RWPE1 (cell line): ENCODE measurements at regions of chr3 and their contacts with region 1.

Region 1: DNA sequence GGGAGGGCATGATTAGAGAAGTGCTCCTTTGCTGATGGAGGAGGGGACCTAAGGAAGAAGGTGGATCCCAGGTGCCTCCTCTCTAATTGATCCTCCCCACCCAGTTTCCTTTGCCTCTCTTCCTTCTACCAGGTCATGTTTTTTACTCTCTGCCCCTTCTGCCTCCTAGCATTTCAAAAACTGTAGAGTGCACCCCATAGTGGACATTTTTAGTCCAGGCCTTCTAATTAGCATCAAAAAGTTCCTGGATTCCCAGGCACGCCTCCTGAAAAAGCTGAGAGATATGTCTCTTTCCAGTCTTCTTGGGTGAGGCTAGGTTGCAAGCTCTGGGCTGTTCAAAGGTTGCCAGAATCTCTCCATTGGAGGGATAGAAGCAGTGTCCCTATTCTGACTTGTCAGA is 18.7 kb upstream of the ITGB5 start:
- DNase-seq: no peak
- H3K27ac ChIP-seq: no peak overlapping the region
- CTCF ChIP-seq: no peak

Region 2: DNA sequence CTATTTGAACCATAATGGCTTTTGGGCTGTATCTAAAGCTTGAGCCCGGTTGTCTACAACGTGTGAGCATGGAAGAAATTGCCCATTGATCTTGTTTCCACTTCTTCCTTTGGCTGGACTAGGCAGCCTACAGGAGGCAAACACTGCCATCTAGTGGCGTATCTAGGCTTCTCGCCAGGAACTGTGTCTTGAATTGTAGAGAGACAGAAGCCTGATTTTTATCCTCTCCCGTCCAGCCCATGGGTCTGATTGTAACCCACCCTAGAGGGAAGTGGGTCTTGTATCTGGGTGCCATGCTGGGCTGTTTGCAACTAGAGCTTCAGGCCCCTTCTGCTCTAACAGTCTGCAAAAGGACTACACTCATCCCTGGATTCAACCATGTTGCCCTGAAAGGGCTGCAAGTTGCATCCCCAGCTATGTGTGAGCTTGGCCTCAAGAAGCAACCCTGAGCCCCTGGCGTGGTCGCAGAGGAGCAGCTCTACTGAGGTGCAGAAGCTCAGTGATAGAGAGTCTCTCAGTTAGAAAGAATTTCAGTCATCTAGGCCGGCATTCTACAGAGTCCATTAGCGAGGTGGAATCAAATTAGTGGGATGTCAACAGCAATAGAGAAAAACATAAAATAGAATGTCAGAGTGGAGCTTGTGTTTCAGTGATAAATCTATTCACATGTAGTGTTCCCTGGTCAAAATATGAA is 345.8 kb before region 1 on chr3:
- CTCF ChIA-PET with region 1: interaction called, 11 read pairs
- POLR2A ChIA-PET with region 1: no interaction called
- DNase-seq: peak; percentile 75
- H3K27ac ChIP-seq: peak overlapping the region; percentile 83
- CTCF ChIP-seq: peak; percentile 87

Region 3: GRCh38 chr3:124676236-124676635 is 229.6 kb before region 1 on chr3:
- CTCF ChIA-PET with region 1: no interaction called
- POLR2A ChIA-PET with region 1: no interaction called
- DNase-seq: no peak
- H3K27ac ChIP-seq: no peak overlapping the region
- CTCF ChIP-seq: no peak

Region 4: GRCh38 chr3:124761250-124761796 is 144.5 kb before region 1 on chr3:
- CTCF ChIA-PET with region 1: interaction called, 61 read pairs
- POLR2A ChIA-PET with region 1: no interaction called
- DNase-seq: peak; percentile 63
- H3K27ac ChIP-seq: no peak overlapping the region
- CTCF ChIP-seq: peak; percentile 94

Region 5: DNA sequence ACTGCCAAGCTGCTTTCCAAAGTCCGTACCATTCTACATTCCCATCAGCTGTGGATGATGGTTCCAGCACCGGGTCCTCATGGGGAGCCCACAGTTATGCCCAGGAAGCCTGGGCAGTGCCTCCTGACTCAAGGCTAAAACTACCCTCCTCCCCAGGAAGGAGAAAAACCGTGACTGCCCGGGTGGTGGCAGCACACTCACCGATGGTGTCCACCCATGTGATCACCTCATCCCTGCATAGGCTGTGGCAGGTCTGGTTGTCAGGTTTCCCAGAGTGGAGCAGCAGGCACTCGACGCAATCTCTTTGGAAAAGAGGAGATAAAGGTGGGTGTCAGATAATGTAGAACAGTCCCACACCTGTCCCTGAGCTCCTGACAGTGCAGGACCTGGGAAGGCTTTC is 137.0 kb before region 1 on chr3:
- CTCF ChIA-PET with region 1: interaction called, 19 read pairs
- POLR2A ChIA-PET with region 1: no interaction called
- DNase-seq: peak; percentile 65
- H3K27ac ChIP-seq: no peak overlapping the region
- CTCF ChIP-seq: no peak

Region 6: GRCh38 chr3:124780356-124780755 is 125.5 kb before region 1 on chr3:
- CTCF ChIA-PET with region 1: interaction called, 48 read pairs
- POLR2A ChIA-PET with region 1: no interaction called
- DNase-seq: no peak
- H3K27ac ChIP-seq: peak overlapping the region; percentile 30
- CTCF ChIP-seq: no peak

Region 7: DNA sequence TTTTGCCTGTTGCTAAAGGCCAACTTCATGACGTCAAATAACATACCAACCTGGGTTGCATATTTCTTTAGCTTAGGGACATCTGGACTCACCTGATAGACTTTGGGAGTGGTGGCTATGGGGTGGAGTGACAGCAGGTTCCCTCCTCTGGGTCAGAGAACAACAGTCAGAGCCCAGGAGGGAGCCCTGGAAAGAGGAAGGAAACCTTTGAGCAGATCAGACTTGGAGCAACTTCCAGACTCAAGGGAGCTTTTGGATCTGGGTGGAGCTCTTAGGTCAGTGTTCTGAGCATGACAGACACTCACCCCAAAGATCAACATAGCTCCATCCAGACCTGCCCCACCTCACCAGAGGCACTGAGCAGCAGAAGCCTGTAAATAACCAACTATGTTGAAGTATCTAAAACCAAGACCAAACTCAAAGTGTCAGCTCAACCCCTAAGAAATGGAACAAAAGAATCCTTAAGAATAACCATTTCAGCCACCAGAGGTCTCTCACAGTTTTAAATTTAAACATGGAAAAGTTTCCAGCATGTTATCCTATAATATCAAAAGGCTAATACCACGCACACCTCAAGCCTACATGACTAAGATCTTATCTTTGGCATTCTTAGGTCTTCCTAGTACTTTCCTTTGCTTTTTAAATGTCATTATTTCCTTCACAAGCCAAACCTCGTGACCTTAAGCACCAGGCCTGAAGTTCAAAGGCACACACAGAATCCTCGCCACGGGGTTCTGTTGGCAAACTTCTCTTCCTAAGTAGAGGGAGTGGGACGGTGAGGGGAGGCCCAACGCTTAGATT is 119.2 kb before region 1 on chr3:
- CTCF ChIA-PET with region 1: interaction called, 48 read pairs
- POLR2A ChIA-PET with region 1: no interaction called
- DNase-seq: peak; percentile 24
- H3K27ac ChIP-seq: peak overlapping the region; percentile 17; the same call in 1 of the 2 replicates
- CTCF ChIP-seq: peak; percentile 27; the same call in 1 of the 2 replicates

Region 8: GRCh38 chr3:124951511-124952281 is 45.8 kb after region 1 on chr3:
- CTCF ChIA-PET with region 1: no interaction called
- POLR2A ChIA-PET with region 1: no interaction called
- DNase-seq: no peak
- H3K27ac ChIP-seq: no peak overlapping the region
- CTCF ChIP-seq: no peak

Region 9: DNA sequence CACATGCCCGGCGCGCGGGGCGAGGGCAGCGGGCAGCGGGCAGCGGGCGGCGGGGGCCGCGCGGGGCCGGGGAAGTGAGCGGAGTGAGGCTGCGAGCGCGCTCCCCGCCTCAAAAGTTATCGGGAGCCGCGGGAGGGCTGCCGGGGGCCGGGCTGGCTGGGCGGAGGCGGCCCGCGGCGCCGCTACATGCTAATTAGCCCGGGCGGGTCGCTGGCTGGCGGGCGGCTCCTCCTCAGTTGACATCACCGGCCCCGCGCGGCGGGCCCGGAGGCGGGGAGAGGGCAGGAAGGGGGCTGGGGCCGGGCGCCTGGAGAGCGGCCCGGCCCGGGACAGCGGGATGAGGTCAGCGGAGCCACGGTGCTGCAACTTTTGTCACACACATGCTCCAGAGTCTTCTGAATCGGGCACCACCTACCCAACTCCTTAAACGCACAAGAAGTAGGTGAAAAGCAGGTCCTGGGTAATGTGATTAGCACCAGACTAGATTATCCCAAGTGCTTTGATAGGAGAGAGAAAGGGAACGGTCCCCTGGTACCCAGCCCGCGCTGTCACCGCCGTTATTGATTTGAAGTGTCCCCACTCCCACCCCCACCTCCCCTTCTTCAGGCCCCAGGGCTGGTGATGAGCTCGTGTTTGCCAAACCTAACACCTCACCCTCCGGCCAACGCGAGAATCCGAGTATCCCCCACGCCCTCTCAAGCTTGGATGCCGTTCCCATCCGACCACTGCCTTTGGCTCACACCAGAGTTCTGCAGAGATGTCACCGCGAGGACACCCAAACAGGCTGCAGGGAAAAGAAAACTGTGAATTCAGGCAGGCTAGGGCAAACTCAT is 150.3 kb after region 1 on chr3 and contains the start of gene HEG1:
- CTCF ChIA-PET with region 1: no interaction called
- POLR2A ChIA-PET with region 1: no interaction called
- DNase-seq: peak; percentile 83
- H3K27ac ChIP-seq: peak within 1 kb of the TSS; percentile 95
- CTCF ChIP-seq: no peak

Region 10: DNA sequence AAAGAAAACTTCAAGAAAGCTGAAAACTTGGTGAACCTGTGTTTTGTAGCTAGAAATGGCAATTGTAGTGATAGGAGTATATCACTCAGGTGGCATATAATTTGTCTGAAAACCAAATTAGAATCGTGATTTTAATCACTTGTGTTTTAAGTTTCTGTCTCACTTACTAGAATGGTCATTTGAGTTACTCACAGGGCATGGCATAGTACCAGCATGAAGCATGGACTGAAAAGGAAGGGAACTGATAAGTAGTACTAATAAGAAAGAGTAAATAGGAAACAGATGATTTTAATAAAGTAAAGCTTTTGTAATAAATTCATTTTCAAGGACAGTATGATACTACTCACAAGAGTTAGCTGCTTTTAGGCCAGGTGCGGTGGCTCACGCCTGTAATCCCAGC is 667.4 kb after region 1 on chr3:
- CTCF ChIA-PET with region 1: no interaction called
- POLR2A ChIA-PET with region 1: no interaction called
- DNase-seq: no peak
- H3K27ac ChIP-seq: no peak overlapping the region
- CTCF ChIP-seq: no peak